ENCODE measurements at regions of chr2 and their contacts with region 1.

Region 1: DNA sequence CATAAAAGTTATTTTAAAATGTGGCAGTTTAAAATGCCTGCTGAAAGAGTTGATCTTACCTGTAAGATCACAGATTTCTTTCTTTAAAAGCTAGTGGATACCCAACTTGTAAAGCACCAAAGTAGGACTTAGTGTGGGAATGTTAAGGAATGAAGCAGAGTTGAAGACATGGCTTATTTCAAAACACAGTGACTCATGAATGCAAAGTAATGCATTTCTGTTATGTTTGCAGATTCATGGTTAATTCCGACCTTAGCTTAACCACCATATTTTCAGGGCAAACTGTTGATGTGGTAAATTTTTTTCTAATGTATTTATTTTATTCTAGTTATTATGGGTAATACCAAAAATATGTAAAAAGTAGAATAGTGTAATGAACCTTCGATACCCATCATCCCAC is 206.8 kb upstream of the FOSL2 start:
- DNase-seq: peak; percentile 55
- H3K4me3 Mint-ChIP-seq: no peak overlapping the region
- H3K27ac Mint-ChIP-seq: peak overlapping the region; percentile 94
- H3K4me1 Mint-ChIP-seq: peaks cover 16% of the 10 kb centered on the region
- H3K27me3 Mint-ChIP-seq: no peaks in the 10 kb centered on the region
- CTCF ChIP-seq: no peak

Region 2: DNA sequence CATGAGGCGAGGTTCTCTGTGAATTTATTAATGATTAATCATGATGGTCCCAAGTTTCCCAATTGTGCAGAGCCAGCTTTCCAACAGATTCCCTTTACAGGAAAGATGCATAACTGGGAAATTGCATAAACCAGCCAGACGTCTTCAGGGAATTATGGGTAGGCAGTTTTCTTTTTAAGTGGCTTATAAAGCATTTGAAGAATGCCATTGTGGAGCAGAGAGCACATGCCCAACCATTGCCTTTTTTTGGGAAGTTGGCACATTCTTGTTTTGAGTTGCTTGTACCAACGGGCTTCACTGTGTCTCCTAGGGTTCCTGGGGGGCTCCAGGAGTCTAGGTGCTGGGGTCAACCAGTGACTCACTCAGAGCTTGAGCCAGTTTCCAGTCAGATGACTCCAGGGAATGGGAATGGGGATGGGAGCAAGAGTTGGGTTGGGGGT is 24.9 kb before region 1 on chr2:
- CTCF ChIA-PET with region 1: no interaction called
- POLR2A ChIA-PET with region 1: interaction called, 17 read pairs
- intact Hi-C with region 1: no loop called
- DNase-seq: peak; percentile 82
- H3K4me3 Mint-ChIP-seq: no peak overlapping the region
- H3K27ac Mint-ChIP-seq: peak overlapping the region; percentile 89
- H3K4me1 Mint-ChIP-seq: peaks cover 45% of the 10 kb centered on the region
- H3K27me3 Mint-ChIP-seq: no peaks in the 10 kb centered on the region
- CTCF ChIP-seq: no peak

Region 3: DNA sequence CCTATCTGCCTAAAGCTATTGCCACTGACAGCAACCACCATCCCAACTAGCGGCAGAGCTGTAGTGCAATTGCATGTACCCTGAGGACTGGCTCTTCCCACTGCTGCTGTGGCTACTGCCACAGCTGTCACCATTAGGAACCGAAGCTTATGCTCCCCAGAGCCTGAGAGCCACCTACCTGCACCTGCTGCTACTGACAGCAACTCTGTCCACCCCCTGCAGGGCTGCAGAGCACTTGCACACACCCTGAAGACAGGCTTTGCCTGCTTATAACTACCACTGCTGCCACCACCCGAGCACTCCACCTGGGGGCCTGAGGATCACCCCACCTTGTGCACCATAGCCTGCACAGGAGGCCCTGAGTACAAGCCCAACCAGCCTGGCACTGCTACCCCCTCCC is 10.9 kb before region 1 on chr2:
- CTCF ChIA-PET with region 1: interaction called, 4 read pairs
- POLR2A ChIA-PET with region 1: interaction called, 23 read pairs
- intact Hi-C with region 1: no loop called
- DNase-seq: no peak
- H3K4me3 Mint-ChIP-seq: no peak overlapping the region
- H3K27ac Mint-ChIP-seq: no peak overlapping the region
- H3K4me1 Mint-ChIP-seq: peaks cover 17% of the 10 kb centered on the region
- H3K27me3 Mint-ChIP-seq: no peaks in the 10 kb centered on the region
- CTCF ChIP-seq: no peak

Region 4: GRCh38 chr2:28252311-28252710 is 66.4 kb after region 1 on chr2:
- CTCF ChIA-PET with region 1: no interaction called
- POLR2A ChIA-PET with region 1: interaction called, 10 read pairs
- intact Hi-C with region 1: no loop called
- DNase-seq: no peak
- H3K4me3 Mint-ChIP-seq: no peak overlapping the region
- H3K27ac Mint-ChIP-seq: peak overlapping the region; percentile 39
- H3K4me1 Mint-ChIP-seq: peaks cover 7% of the 10 kb centered on the region
- H3K27me3 Mint-ChIP-seq: no peaks in the 10 kb centered on the region
- CTCF ChIP-seq: no peak

Region 5: DNA sequence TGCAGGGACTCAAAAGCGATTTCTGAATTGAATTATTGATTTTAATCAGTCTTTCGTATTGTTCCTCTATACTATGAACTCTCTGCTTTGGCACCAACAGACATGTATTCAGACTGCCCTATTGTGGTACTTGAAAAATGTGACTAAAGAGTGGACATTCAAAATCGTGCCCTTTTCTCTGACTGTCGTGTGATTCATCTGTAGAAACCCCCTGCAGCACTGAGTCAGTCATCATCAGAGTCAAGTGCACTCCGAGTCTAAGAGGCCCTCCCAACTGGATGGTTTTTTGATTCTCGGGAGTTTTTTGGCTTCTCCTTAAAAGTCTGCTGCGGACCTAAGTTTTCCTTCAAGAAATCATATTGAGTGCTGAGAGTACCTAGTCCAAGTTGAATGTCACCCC is 110.4 kb after region 1 on chr2:
- CTCF ChIA-PET with region 1: no interaction called
- POLR2A ChIA-PET with region 1: no interaction called
- intact Hi-C with region 1: no loop called
- DNase-seq: peak; percentile 35
- H3K4me3 Mint-ChIP-seq: no peak overlapping the region
- H3K27ac Mint-ChIP-seq: no peak overlapping the region
- H3K4me1 Mint-ChIP-seq: no peaks in the 10 kb centered on the region
- H3K27me3 Mint-ChIP-seq: no peaks in the 10 kb centered on the region
- CTCF ChIP-seq: no peak

Region 6: DNA sequence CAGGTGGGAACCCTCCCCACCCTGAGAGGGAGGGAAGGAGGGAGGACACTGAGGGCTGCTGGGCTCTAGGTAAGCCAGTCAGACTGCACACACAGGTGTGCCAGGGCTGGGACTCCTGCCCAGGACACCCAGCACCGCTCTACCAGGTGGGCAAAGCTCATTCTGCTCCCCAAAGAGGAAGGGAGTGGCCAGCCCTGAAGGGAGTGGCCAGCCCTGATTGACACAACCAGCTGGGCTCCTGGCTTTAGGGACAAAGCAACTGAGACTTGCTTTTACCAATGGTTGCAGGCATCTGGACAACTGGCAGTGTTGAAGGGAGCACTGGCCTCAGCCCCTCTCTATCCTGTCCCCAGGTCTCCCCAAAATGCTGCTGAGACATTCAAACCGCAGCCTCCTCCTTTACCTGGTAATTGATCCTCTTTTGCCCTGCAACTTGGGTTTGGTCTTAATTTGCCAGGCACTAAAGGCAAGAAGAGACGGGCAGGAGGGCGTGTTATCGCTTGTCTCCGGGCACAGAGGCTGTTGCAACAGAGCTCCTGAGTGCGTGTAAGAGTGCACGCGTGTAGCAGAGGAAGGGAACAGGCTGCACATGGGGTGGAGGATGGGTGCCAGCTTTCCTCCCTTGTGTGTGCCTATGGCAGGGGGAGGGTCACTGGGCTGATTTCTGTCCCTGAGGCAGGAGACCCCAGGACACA is 192.2 kb after region 1 on chr2:
- CTCF ChIA-PET with region 1: no interaction called
- POLR2A ChIA-PET with region 1: interaction called, 17 read pairs
- intact Hi-C with region 1: no loop called
- DNase-seq: peak; percentile 93
- H3K4me3 Mint-ChIP-seq: peak overlapping the region; percentile 61
- H3K27ac Mint-ChIP-seq: peak overlapping the region; percentile 70
- H3K4me1 Mint-ChIP-seq: peaks cover 29% of the 10 kb centered on the region
- H3K27me3 Mint-ChIP-seq: no peaks in the 10 kb centered on the region
- CTCF ChIP-seq: no peak